SK-N-SH (cell line): ENCODE measurements at regions of chr5 and their contacts with region 1.

Region 1: GRCh38 chr5:50962934-50963872 is 296.8 kb downstream of the PARP8 start:
- DNase-seq: peak; percentile 87
- H3K4me3 ChIP-seq: peak overlapping the region; percentile 57 to 81
- H3K27ac ChIP-seq: peak overlapping the region in 1 of 2 experiments; percentile 84; a peak in 2 of 4 replicates
- H3K4me1 ChIP-seq: peaks cover 0 to 30% of the 10 kb centered on the region in 2 experiments; a peak in 2 of 4 replicates
- H3K27me3 ChIP-seq: peaks cover 38% of the 10 kb centered on the region
- CTCF ChIP-seq: peak; percentile 99
- EP300 ChIP-seq: no peak
- RAD21 ChIP-seq: peak; percentile 100

Region 2: DNA sequence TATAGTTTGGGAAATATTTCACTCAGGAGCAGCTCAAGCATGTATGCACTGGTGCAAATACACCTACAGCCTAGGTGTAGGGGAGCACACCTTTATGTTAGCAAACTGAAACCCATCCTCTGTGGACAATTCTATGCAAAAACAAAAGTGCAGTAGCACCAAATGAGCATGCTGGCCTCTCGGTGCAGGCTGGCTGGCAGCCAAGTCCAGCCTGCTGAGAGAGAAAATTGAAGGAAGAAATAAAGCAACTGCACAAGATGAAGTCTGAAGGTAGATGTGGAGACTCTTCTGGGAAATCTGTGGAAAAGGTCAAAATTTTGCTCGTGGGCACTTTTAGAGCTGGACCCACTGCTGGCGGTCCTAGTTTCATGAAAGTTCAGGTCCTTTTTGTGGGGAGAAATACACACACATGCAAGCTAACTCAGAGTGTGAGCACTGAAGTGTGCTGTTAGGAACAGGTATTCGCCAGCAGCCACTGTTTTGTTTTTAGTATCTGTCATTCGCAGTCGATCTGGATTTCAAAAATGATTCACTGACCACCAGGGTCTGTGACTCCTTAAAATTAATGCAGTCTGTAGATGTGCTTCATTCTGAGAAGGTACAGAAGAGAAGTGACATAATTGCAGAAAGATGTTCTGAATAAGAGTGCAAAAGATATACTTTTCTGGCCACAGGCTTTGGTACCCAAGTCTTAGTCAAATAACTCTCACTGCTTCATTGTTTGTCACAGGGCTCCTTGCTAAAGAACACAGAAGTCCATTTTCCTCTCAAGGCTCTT is 15.1 kb before region 1 on chr5:
- CTCF ChIA-PET with region 1: interaction called, 10 read pairs
- POLR2A ChIA-PET with region 1: no interaction called
- DNase-seq: peak; percentile 40
- H3K4me3 ChIP-seq: no peak overlapping the region
- H3K27ac ChIP-seq: no peak overlapping the region
- H3K4me1 ChIP-seq: peaks cover 0 to 5% of the 10 kb centered on the region in 2 experiments; a peak in 2 of 4 replicates
- H3K27me3 ChIP-seq: no peaks in the 10 kb centered on the region
- CTCF ChIP-seq: no peak
- EP300 ChIP-seq: no peak
- RAD21 ChIP-seq: no peak

Region 3: DNA sequence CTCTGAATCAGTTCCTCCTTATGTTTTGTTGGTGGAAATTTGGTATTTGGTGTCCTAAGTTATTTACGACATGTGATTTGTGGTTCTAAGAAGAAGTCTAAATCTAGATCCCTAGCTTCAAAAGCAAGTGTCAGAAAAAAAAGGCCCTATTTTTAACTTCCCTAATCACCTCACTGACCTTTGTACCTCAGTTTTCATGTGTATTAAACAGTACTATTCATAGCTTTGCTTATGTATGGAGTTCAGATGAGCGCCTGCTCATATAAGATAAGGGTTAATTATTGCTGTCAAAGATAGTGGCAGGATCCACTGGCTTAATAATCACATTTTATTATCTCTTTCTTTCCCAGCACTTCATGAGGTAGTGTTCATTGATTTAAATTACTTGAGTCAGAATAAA is 21.4 kb after region 1 on chr5:
- CTCF ChIA-PET with region 1: no interaction called
- POLR2A ChIA-PET with region 1: no interaction called
- DNase-seq: no peak
- H3K4me3 ChIP-seq: no peak overlapping the region
- H3K27ac ChIP-seq: no peak overlapping the region
- H3K4me1 ChIP-seq: no peaks in the 10 kb centered on the region; a peak in 2 of 4 replicates
- H3K27me3 ChIP-seq: no peaks in the 10 kb centered on the region
- CTCF ChIP-seq: no peak
- EP300 ChIP-seq: no peak
- RAD21 ChIP-seq: no peak

Region 4: DNA sequence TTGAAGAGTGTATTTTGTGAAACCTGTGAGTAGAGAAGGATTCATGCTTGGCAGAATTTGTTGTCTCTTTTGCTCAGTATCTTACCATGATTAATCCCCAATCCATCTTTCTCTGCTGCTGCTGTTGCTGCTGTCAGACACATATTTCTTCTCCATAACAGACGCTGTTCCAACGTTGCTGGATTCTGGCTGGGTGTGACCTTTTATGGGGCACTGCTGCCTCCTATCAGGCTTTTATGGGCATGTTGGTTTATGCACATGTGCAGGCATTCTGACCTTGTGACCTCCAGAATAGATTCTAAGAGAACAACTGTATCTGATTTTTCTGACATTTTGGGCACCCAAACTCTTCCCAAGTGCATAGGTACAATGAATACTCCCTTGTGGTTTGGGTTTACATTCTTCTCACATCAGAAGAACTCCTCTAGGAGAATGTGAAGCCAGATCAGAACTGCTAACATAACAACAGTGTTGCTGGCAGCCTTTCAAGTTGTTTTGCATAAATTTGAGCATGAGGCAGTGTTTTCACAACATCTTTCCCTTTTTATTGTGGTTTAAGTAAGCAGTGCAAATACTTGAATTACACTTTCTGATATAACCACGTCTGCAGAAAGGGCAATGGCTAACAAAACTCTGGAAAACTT is 410.8 kb after region 1 on chr5:
- CTCF ChIA-PET with region 1: interaction called, 303 read pairs
- POLR2A ChIA-PET with region 1: interaction called, 437 read pairs
- DNase-seq: peak; percentile 20
- H3K4me3 ChIP-seq: no peak overlapping the region
- H3K27ac ChIP-seq: peak overlapping the region in 1 of 2 experiments; percentile 88; a peak in 2 of 4 replicates
- H3K4me1 ChIP-seq: peaks cover 0 to 35% of the 10 kb centered on the region in 2 experiments; a peak in 2 of 4 replicates
- H3K27me3 ChIP-seq: no peaks in the 10 kb centered on the region
- CTCF ChIP-seq: 0 out of 2 replicates have a peak, but pooled peaks have one; percentile 16
- EP300 ChIP-seq: 0 out of 4 replicates have a peak, but pooled peaks of 1 of the 2 experiments have one; percentile 15
- RAD21 ChIP-seq: peak; percentile 81

Region 5: GRCh38 chr5:51414516-51414915 is 451.3 kb after region 1 on chr5:
- CTCF ChIA-PET with region 1: interaction called, 10 read pairs
- POLR2A ChIA-PET with region 1: interaction called, 12 read pairs
- DNase-seq: no peak
- H3K4me3 ChIP-seq: no peak overlapping the region
- H3K27ac ChIP-seq: peak overlapping the region in 1 of 2 experiments; percentile 43; a peak in 2 of 4 replicates
- H3K4me1 ChIP-seq: peaks cover 8 to 47% of the 10 kb centered on the region in 2 experiments; a peak in 2 of 4 replicates
- H3K27me3 ChIP-seq: no peaks in the 10 kb centered on the region
- CTCF ChIP-seq: no peak
- EP300 ChIP-seq: no peak
- RAD21 ChIP-seq: no peak

Region 6: GRCh38 chr5:51987669-51988209 is 1024.5 kb after region 1 on chr5:
- CTCF ChIA-PET with region 1: interaction called, 14 read pairs
- POLR2A ChIA-PET with region 1: interaction called, 13 read pairs
- DNase-seq: no peak
- H3K4me3 ChIP-seq: no peak overlapping the region
- H3K27ac ChIP-seq: peak overlapping the region in 1 of 2 experiments; percentile 100; a peak in 2 of 4 replicates
- H3K4me1 ChIP-seq: peaks cover 0 to 50% of the 10 kb centered on the region in 2 experiments; a peak in 2 of 4 replicates
- H3K27me3 ChIP-seq: no peaks in the 10 kb centered on the region
- CTCF ChIP-seq: no peak
- EP300 ChIP-seq: no peak
- RAD21 ChIP-seq: no peak

Region 7: DNA sequence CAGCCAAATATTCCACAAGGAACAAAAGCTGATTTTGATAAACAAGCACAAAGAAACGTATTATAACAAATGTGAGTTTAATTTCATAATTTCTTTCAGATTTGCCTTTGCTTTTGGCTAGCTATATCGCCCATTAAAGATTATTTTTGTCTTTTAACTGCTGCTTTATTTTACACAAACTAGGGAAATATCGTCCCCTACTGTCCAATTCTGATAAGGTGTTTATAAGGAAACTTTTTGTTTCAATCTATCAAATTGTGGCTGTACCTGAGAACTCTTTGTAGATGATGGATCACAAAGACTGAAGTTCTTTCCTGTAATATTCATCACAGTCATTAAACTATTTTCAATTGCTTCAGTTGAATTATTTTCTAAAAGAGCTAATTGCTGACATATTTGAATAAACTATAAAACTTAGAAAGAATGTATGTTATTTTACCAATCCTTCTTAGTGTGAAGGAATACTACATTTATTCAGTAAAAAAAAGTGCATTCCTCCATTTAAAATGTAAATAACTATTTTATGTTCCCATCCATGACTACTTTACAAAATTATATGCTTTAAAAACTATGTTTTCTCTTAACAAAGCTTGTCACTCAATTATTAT is 1393.2 kb after region 1 on chr5:
- CTCF ChIA-PET with region 1: interaction called, 30 read pairs
- POLR2A ChIA-PET with region 1: interaction called, 7 read pairs
- DNase-seq: peak; percentile 25
- H3K4me3 ChIP-seq: no peak overlapping the region
- H3K27ac ChIP-seq: peak overlapping the region in 1 of 2 experiments; percentile 87; a peak in 2 of 4 replicates
- H3K4me1 ChIP-seq: peaks cover 0 to 7% of the 10 kb centered on the region in 2 experiments; a peak in 3 of 4 replicates
- H3K27me3 ChIP-seq: no peaks in the 10 kb centered on the region
- CTCF ChIP-seq: peak; percentile 80
- EP300 ChIP-seq: no peak; a peak in 1 of 4 replicates
- RAD21 ChIP-seq: peak; percentile 89